A673 (cell line): ENCODE measurements at regions of chr20 and their contacts with region 1.

Region 1: DNA sequence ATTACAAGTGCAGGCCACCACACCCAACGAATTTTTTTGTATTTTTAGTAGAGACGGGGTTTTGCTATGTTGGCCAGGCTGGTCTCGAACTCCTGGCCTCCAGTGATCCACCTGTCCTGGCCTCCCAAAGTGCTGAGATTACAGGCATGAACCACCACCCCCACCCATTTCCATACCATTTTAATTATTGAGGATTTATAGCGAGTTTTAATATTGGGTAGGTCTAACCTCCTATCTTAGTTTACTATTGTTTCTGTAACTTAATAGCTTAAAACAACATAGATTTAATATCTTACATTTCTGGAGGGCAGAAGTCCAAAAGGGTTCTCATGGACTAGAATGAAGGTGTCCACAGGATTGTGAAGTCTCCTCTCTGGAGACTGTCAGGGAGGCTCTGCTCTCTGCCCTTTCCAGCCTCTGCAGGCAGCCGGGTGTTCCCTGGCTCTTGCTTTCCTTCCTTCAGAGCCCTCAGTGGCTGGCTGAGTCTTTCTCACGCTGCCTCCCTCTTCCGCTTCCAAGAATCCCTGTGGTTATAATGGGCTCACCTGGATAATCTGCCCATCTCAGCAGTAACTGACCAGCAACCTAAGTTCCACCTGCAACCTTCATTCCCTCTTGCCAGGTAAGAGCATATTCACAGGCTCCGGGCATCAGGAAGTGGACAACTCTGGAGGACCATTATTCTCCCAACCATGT is 18.6 kb upstream of the BCAS4 start:
- DNase-seq: peak; percentile 65
- H3K4me3 ChIP-seq: peak overlapping the region; percentile 42
- H3K27ac ChIP-seq: peak overlapping the region; percentile 100
- H3K4me1 ChIP-seq: peaks cover 47% of the 10 kb centered on the region
- H3K27me3 ChIP-seq: no peaks in the 10 kb centered on the region
- CTCF ChIP-seq: no peak

Region 2: DNA sequence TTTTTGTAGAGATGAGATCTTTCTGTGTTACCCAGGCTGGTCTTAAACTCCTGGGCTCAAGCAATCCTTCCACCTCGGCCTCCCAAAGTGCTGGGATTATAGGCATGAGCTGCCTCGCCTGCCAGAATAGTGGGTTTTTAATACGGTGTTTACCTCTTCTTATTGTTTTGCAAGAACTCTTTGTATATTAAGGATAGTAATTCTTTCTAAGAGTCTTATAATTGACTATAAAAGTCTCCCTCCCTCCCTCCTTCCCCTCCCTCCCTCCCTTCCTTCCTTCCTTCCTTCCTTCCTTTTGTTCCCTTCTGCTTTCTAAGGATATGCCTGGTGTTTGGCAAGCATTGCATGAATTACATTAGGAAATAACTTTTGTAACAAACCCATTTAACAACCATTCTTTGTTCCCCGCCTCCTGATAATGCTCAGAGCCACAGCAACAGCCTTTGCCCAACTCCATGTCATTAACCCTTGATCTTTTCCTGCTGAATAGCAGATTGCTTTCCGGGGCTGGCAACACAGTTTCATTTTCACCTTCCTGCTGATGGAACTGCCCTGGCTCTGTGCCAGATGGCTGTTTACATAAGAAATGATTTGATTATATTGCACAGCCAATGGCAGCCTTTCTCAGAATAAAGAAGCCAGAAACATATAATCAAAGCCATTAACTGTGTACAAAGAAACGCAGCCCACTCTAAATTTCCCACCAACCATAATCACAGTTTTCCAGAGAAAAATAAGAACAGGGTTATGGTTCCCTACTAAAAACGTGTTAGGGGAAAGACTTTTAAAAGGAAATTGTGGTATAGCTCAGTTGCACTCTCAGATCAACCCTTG is 409.8 kb before region 1 on chr20:
- CTCF ChIA-PET with region 1: no interaction called
- POLR2A ChIA-PET with region 1: interaction called, 9 read pairs
- intact Hi-C with region 1: loop called (anchors 1 kb)
- DNase-seq: peak; percentile 99
- H3K4me3 ChIP-seq: no peak overlapping the region
- H3K27ac ChIP-seq: peak overlapping the region; percentile 91
- H3K4me1 ChIP-seq: peaks cover 20% of the 10 kb centered on the region
- H3K27me3 ChIP-seq: no peaks in the 10 kb centered on the region
- CTCF ChIP-seq: no peak

Region 3: DNA sequence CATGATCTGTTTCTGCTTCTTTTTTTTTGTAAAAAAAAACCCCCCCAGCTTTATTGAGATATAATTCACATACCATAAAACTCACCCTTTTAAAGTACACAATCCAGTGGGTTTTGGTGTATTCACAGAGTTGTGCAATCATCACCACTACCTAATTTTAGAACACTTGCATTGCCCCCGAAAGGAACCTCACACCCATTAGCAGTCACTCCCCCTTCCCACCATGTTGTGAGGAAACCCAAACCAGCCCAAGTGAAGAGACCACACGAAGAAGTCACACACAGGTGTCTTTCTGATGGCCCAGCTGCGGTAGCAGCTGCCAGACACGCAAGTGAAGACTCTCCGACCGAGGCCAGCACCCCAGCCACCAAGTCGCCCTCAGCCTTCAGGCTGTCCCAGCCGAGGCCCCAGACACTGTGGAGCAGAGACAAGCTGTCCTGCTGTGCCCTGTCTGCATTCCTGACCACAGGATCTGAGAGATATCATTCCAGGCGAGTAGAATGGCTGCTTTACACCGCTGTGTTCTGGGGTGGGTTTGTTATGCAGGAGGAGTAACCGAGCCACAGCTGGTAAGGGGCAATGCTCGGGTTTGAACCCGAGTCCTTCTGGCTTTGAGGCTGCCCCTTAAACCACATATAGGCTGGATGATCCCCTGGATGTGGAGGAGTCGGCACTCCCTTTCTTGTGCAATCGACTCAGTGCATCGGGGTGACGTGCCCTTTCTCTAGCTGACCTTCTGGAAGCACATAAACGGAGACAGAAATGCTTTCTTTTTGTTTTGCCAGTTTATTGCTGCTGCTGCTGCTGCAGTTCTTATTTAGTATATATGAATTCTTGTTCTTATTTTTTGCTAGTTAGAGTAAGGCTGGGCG is 325.2 kb before region 1 on chr20:
- CTCF ChIA-PET with region 1: no interaction called
- POLR2A ChIA-PET with region 1: no interaction called
- intact Hi-C with region 1: loop called (anchors 5 kb)
- DNase-seq: peak; percentile 51
- H3K4me3 ChIP-seq: peak overlapping the region; percentile 16
- H3K27ac ChIP-seq: peak overlapping the region; percentile 83
- H3K4me1 ChIP-seq: peaks cover 28% of the 10 kb centered on the region
- H3K27me3 ChIP-seq: no peaks in the 10 kb centered on the region
- CTCF ChIP-seq: no peak

Region 4: GRCh38 chr20:50731055-50731871 is 45.0 kb before region 1 on chr20 and contains the start of gene PARD6B:
- CTCF ChIA-PET with region 1: no interaction called
- POLR2A ChIA-PET with region 1: no interaction called
- intact Hi-C with region 1: loop called (anchors 1 kb)
- DNase-seq: peak; percentile 99
- H3K4me3 ChIP-seq: peak within 1 kb of the TSS; percentile 94
- H3K27ac ChIP-seq: peak within 1 kb of the TSS; percentile 90
- H3K4me1 ChIP-seq: peaks cover 29% of the 10 kb centered on the region
- H3K27me3 ChIP-seq: no peaks in the 10 kb centered on the region
- CTCF ChIP-seq: no peak
- total RNA-seq, gene PARD6B: 24.7 and 28.1 TPM in 2 replicates

Region 5: DNA sequence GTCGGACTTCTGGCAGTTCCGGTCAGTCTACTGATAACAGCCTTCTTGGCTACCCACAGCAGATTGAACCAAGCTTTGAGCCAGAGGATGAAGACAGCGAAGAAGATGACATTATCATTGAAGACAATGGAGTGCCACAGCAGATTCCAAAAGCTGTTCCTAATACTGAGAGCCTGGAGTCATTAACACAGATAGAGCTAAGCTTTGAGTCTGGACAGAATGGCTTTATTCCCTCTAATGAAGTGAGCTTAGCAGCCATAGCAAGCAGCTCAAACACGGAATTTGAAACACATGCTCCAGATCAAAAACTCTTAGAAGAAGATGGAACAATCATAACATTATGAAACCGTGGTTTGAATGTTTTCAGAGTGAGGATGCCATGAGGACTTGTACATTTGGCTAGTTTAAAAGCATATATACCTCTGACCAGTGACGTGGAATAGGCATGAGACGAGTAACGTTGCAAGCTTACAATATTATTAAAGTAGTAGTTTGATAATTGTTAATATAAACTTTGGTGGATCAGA is 26.1 kb before region 1 on chr20:
- CTCF ChIA-PET with region 1: no interaction called
- POLR2A ChIA-PET with region 1: interaction called, 16 read pairs
- intact Hi-C with region 1: no loop called
- DNase-seq: no peak
- H3K4me3 ChIP-seq: no peak overlapping the region
- H3K27ac ChIP-seq: peak overlapping the region; percentile 17
- H3K4me1 ChIP-seq: peaks cover 27% of the 10 kb centered on the region
- H3K27me3 ChIP-seq: no peaks in the 10 kb centered on the region
- CTCF ChIP-seq: no peak

Region 6: DNA sequence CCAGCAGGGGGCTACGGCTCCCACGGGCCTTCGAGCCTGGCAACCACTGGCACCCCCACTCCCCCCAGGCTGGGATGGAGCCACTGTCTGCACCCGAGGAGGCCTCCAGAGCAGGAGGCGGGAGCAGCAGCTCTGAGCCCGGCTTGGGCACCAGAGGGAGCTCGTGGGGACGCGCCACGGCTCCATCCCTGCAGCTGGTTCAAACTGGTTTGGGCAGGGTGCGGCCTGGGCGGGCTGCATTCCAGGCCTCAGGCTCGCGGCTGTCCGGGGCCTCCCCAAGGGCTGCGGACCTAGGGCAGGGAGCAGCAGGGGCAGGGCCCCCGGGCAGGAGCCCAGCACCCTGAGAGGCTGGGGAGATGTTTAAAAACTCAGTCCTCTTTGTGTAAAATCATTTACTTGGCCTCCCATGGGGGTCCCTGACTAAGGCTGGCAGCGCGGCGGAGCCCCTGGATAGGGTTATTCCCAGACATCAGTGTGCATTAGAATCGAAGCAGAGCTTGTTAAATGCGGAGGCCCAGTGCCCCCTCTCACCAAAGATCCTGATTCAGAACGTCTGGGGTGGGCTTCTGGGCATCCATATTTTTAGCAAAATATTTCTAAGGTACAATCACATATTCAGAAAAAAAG is 14.5 kb after region 1 on chr20:
- CTCF ChIA-PET with region 1: interaction called, 8 read pairs
- POLR2A ChIA-PET with region 1: interaction called, 10 read pairs
- intact Hi-C with region 1: no loop called
- DNase-seq: peak; percentile 94
- H3K4me3 ChIP-seq: no peak overlapping the region
- H3K27ac ChIP-seq: peak overlapping the region; percentile 88
- H3K4me1 ChIP-seq: peaks cover 47% of the 10 kb centered on the region
- H3K27me3 ChIP-seq: no peaks in the 10 kb centered on the region
- CTCF ChIP-seq: peak; percentile 89